GM10248 (cell line): ENCODE measurements at regions of chr2 and their contacts with region 1.

Region 1: GRCh38 chr2:214809751-214810564 is 475 bp upstream of the BARD1 start:
- DNase-seq: peak; percentile 98
- CTCF ChIP-seq: no peak

Region 2: GRCh38 chr2:214261683-214262082 is 548.3 kb before region 1 on chr2:
- CTCF ChIA-PET with region 1: no interaction called
- POLR2A ChIA-PET with region 1: no interaction called
- DNase-seq: no peak
- CTCF ChIP-seq: no peak

Region 3: DNA sequence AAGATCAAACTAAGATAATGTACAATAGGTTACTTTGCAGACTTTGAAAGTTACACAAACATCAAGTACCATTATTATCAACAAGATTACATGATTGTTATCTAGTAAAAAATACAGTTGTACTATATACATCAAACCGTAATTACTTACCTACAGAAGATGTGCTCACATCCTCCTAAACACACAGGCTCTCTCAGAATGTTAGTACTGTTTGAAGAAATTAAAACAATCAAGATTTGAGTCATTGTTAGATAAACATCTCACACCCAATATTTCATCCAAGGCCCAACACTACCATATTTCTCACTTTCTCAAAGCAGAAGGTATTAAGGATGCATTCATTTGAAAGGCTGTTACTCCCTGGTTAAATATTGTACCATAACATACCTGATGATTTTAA is 13.0 kb before region 1 on chr2:
- CTCF ChIA-PET with region 1: interaction called, 10 read pairs
- POLR2A ChIA-PET with region 1: interaction called, 4 read pairs
- DNase-seq: no peak
- CTCF ChIP-seq: no peak